CD8-positive, alpha-beta T cell (primary cell): ENCODE measurements at regions of chr17 and their contacts with region 1.

Region 1: GRCh38 chr17:81860756-81861518 is 602 bp upstream of the P4HB start:
- DNase-seq: peak; percentile 98 to 100 (median 99)
- ATAC-seq: peak; percentile 87
- H3K4me3 ChIP-seq: peak overlapping the region; percentile 54 to 72
- H3K4me3 Mint-ChIP-seq: peak overlapping the region; percentile 90
- H3K27ac ChIP-seq: peak overlapping the region; percentile 88 to 98
- H3K27ac Mint-ChIP-seq: peak overlapping the region; percentile 98
- H3K4me1 ChIP-seq: peaks cover 33% of the 10 kb centered on the region
- H3K4me1 Mint-ChIP-seq: peaks cover 44% of the 10 kb centered on the region
- H3K27me3 ChIP-seq: no peaks in the 10 kb centered on the region
- H3K27me3 Mint-ChIP-seq: no peaks in the 10 kb centered on the region
- CTCF ChIP-seq: no peak

Region 2: GRCh38 chr17:81238817-81239600 is 621.9 kb before region 1 on chr17 and contains the starts of genes NDUFAF8 and TEPSIN:
- CTCF ChIA-PET with region 1: no interaction called
- POLR2A ChIA-PET with region 1: no interaction called
- intact Hi-C with region 1: loop called in 1 of 2 experiments (anchors 1 kb)
- DNase-seq: peak; percentile 91 to 99 (median 95)
- ATAC-seq: peak; percentile 94
- H3K4me3 ChIP-seq: peak within 1 kb of the TSS; percentile 80 to 84
- H3K4me3 Mint-ChIP-seq: peak within 1 kb of the TSS; percentile 92
- H3K27ac ChIP-seq: peak within 1 kb of the TSS; percentile 51 to 68
- H3K27ac Mint-ChIP-seq: peak within 1 kb of the TSS; percentile 87
- H3K4me1 ChIP-seq: peaks cover 39% of the 10 kb centered on the region
- H3K4me1 Mint-ChIP-seq: peaks cover 43% of the 10 kb centered on the region
- H3K27me3 ChIP-seq: no peaks in the 10 kb centered on the region
- H3K27me3 Mint-ChIP-seq: no peaks in the 10 kb centered on the region
- CTCF ChIP-seq: no peak
- total RNA-seq, gene NDUFAF8: 40.6 to 50.9 TPM
- total RNA-seq, gene TEPSIN: 81.4 to 88.8 TPM

Region 3: GRCh38 chr17:81702971-81703746 is 157.8 kb before region 1 on chr17 and contains the start of gene MRPL12:
- CTCF ChIA-PET with region 1: no interaction called
- POLR2A ChIA-PET with region 1: interaction called, 4 read pairs
- intact Hi-C with region 1: loop called in 1 of 2 experiments (anchors 1 kb)
- DNase-seq: peak; percentile 73 to 95 (median 90)
- ATAC-seq: peak; percentile 87
- H3K4me3 ChIP-seq: peak within 1 kb of the TSS; percentile 79 to 84
- H3K4me3 Mint-ChIP-seq: peak within 1 kb of the TSS; percentile 87
- H3K27ac ChIP-seq: peak within 1 kb of the TSS; percentile 96 to 97
- H3K27ac Mint-ChIP-seq: peak within 1 kb of the TSS; percentile 94
- H3K4me1 ChIP-seq: peaks cover 29% of the 10 kb centered on the region
- H3K4me1 Mint-ChIP-seq: peaks cover 31% of the 10 kb centered on the region
- H3K27me3 ChIP-seq: no peaks in the 10 kb centered on the region
- H3K27me3 Mint-ChIP-seq: no peaks in the 10 kb centered on the region
- CTCF ChIP-seq: no peak
- total RNA-seq, gene MRPL12: 33.2 to 36.6 TPM

Region 4: GRCh38 chr17:81871387-81872230 is 10.7 kb after region 1 on chr17:
- CTCF ChIA-PET with region 1: interaction called, 4 read pairs
- POLR2A ChIA-PET with region 1: interaction called, 23 read pairs
- intact Hi-C with region 1: loop called (anchors 1 kb)
- DNase-seq: peak; percentile 90 to 97 (median 96)
- ATAC-seq: peak; percentile 29
- H3K4me3 ChIP-seq: peak overlapping the region; percentile 93 to 94
- H3K4me3 Mint-ChIP-seq: peak overlapping the region; percentile 87
- H3K27ac ChIP-seq: peak overlapping the region; percentile 96 to 98
- H3K27ac Mint-ChIP-seq: peak overlapping the region; percentile 96
- H3K4me1 ChIP-seq: peaks cover 39% of the 10 kb centered on the region
- H3K4me1 Mint-ChIP-seq: peaks cover 40% of the 10 kb centered on the region
- H3K27me3 ChIP-seq: no peaks in the 10 kb centered on the region
- H3K27me3 Mint-ChIP-seq: no peaks in the 10 kb centered on the region
- CTCF ChIP-seq: no peak

Region 5: DNA sequence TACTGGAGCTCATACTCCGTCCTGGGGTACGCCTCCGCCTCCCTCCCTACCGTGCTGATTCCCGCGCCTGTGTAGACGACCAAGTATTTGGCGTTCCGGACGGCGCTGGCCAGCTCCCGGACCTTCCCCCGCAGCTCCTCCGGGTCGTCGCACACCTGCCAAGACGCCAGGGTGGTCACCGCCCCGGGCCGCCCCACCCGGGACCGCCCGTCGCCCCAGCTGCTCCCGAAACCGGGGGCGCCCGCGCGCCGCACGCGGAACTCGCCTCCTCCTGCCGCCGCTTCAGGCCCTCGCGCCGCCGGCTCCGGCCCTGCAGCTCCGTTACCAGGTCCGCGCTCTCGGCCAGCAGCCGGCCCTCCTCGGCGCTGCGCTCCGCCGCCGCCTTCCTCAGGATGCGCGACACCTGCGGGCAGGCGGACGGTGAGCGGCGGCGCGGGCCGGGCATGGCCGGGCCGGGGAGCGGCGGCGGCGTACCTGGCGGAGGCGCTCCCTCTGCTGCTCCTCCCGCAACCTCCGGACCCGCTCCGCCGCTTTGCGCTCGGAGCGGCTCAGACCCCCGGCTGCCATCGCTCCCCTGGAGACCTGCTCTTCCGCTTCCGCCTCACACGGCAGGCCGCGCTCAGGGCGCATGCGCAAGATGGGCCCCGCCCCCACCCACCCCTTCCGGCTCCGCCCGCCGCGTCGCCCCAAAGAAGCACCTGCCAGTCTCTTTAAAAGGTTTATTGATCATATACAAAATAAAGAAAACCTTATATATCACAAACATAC is 56.8 kb after region 1 on chr17 and contains the start of gene SIRT7:
- CTCF ChIA-PET with region 1: no interaction called
- POLR2A ChIA-PET with region 1: no interaction called
- intact Hi-C with region 1: loop called in 1 of 2 experiments (anchors 2 kb)
- DNase-seq: peak; percentile 67 to 92 (median 82)
- ATAC-seq: peak; percentile 93
- H3K4me3 ChIP-seq: peak within 1 kb of the TSS; percentile 63 to 69
- H3K4me3 Mint-ChIP-seq: peak within 1 kb of the TSS; percentile 91
- H3K27ac ChIP-seq: peak within 1 kb of the TSS; percentile 51 to 75
- H3K27ac Mint-ChIP-seq: peak within 1 kb of the TSS; percentile 88
- H3K4me1 ChIP-seq: peaks cover 14% of the 10 kb centered on the region
- H3K4me1 Mint-ChIP-seq: peaks cover 27% of the 10 kb centered on the region
- H3K27me3 ChIP-seq: no peaks in the 10 kb centered on the region
- H3K27me3 Mint-ChIP-seq: no peaks in the 10 kb centered on the region
- CTCF ChIP-seq: no peak
- total RNA-seq, gene SIRT7: 75.2 to 76.1 TPM

Region 6: DNA sequence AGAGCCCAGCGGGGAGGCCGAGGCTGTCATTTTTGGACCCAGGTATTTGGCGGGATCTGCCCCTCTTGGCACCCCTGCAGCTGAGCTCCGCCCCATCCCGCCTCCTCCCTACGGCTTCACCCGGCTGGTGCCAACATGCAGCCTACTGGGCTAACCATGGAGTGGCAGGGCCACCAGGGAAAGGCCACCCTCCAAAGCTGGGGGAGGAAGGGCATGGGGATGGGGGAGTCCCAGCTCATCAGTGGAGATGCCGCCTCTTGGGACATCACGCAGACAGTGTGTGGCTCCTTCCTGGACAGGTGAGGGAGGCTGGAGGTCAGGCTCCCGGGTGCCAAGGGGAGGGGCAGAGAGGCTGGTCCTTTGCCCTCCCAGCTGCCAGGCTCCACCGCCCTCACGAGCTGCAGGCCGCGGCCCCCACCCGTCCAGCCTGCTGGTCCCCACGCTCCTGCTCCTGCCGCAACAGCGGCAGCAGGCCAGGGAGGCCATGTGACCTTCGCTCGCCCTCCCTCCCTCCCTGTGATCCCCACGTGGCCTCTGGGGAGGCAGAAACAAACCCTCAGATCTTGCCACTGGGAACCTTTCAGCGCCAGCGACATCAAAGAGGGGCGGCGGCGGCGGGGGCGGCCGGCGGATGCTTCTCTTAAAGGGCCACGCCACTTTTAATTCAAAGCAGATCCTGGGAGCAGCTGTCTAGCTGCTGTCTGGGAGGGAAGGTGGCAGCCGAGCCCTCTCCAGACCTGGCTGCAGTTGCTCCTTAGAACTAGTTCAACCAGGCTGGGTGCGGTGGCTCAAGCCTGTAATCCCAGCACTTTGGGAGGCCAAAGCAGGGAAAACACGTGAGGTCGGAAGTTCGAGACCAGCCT is 106.8 kb after region 1 on chr17:
- CTCF ChIA-PET with region 1: no interaction called
- POLR2A ChIA-PET with region 1: no interaction called
- intact Hi-C with region 1: no loop called
- DNase-seq: peak; percentile 64 to 93 (median 87)
- ATAC-seq: peak; percentile 91
- H3K4me3 ChIP-seq: peak overlapping the region; percentile 45 to 64
- H3K4me3 Mint-ChIP-seq: peak overlapping the region; percentile 72
- H3K27ac ChIP-seq: peak overlapping the region in 1 of 2 experiments; percentile 27
- H3K27ac Mint-ChIP-seq: peak overlapping the region; percentile 77
- H3K4me1 ChIP-seq: peaks cover 33% of the 10 kb centered on the region
- H3K4me1 Mint-ChIP-seq: peaks cover 27% of the 10 kb centered on the region
- H3K27me3 ChIP-seq: peaks cover 0 to 3% of the 10 kb centered on the region in 2 experiments
- H3K27me3 Mint-ChIP-seq: peaks cover 2% of the 10 kb centered on the region
- CTCF ChIP-seq: no peak

Region 7: DNA sequence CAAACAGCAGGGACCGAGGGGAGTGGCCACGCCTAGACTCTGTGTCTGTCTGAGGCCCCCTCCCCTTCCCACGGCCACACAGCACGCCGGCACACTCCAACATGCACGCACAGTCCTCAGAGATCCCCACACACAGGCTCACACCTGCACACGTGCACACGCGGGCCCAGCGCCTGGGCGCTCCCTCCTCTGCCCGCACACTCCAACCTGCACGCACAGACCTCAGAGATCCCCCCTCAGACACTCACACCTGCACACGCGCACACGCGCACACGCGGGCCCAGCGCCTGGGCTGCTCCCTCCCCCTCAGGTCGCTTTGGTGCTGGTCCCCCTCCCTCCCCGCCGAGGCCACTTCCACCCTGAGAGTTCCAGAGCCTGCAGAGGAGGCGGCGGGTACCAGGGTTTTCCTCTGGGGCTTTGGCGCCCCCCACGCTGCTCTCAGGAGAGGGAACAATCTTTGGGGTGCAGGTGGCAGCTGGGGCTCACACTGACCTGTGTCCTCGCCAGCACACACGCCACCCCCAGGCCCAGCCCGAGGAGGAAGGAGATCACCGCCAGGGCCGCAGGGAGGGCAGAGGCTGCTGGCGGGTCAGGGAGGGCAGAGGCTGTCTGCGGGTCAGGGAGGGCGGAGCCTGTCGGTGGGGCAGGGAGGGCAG is 454.9 kb after region 1 on chr17:
- CTCF ChIA-PET with region 1: no interaction called
- POLR2A ChIA-PET with region 1: no interaction called
- intact Hi-C with region 1: loop called in 1 of 2 experiments (anchors 10 kb)
- DNase-seq: peak in 8 of 9 experiments; percentile 46 to 83 (median 71)
- ATAC-seq: peak; percentile 43
- H3K4me3 ChIP-seq: peak overlapping the region; percentile 90 to 91
- H3K4me3 Mint-ChIP-seq: peak overlapping the region; percentile 94
- H3K27ac ChIP-seq: peak overlapping the region; percentile 76 to 78
- H3K27ac Mint-ChIP-seq: peak overlapping the region; percentile 94
- H3K4me1 ChIP-seq: peaks cover 35% of the 10 kb centered on the region
- H3K4me1 Mint-ChIP-seq: peaks cover 26% of the 10 kb centered on the region
- H3K27me3 ChIP-seq: no peaks in the 10 kb centered on the region
- H3K27me3 Mint-ChIP-seq: no peaks in the 10 kb centered on the region
- CTCF ChIP-seq: no peak